ENCODE measurements at regions of chr19 and their contacts with region 1.

Region 1: DNA sequence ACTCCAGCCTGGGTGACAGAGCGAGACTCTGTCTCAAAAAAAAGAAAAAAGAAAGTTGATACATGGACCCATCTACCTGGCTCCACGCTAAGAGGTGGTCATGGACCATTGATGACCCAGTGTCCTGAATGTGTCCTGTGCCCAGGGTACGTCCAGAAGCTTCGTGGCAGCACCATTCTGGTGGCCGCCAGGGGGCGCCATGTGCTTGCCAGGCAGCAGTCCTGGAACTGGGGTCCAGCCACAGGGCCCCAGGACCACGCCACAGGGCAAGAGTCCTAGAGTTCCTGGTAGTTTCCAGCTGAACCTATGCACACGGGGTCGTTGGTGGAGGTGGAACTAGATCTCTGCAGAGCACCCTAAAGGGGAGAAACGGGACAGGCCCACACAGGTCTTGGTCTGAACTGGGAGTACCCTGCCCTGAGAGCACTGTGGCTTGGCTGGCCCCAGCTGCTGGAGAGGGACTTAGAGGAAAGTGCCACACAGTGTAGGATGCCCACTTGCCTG is 19.9 kb upstream of the FBXO27 start:
- DNase-seq: no peak
- H3K27ac ChIP-seq: no peak overlapping the region
- CTCF ChIP-seq: peak; percentile 90

Region 2: GRCh38 chr19:38899447-38900219 is 152.7 kb before region 1 on chr19 and contains the starts of genes NFKBIB and SIRT2:
- CTCF ChIA-PET with region 1: no interaction called
- POLR2A ChIA-PET with region 1: no interaction called
- DNase-seq: peak; percentile 99
- H3K27ac ChIP-seq: peak within 1 kb of the TSS; percentile 72
- CTCF ChIP-seq: no peak

Region 3: GRCh38 chr19:38949580-38950367 is 102.5 kb before region 1 on chr19:
- CTCF ChIA-PET with region 1: no interaction called
- POLR2A ChIA-PET with region 1: no interaction called
- DNase-seq: no peak
- H3K27ac ChIP-seq: no peak overlapping the region
- CTCF ChIP-seq: no peak

Region 4: DNA sequence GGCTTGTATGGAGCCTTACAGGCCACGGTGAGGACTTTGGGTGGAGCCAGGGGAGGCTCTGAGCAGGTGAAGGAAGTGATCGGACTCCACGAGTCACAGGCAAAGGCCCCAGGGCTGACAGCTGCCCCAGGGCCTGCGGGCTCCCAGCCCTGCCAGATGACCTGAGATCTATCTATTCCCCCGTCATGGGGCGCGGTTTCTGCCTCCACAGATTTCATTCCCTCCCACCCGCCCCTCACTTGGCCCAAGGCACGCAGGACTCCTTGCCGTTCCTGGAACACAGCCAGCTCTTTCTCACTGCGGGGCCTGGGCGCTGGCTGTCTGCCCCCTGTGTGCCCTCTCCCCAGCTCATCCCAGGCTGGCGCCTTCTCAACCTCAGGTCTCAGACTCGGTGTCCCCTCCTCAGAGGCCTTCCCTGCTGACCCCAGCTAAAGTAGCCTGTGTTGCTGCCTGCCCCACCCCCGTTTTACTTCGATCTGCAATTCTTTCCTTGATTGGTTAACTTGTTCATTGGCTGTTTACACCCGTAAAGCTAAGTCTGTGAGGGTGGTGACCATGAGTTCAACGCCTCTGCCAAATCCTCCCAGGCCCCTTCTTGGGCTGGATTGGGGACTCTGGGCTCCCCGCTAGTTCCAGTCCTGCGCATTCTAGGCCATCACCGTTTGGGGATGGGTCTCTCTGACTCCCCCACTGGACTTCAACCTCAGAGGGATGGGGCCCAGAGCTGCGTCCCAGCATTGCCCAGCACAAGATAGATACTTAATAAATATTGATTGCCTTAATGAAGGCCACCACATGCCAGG is 59.5 kb after region 1 on chr19:
- CTCF ChIA-PET with region 1: interaction called, 16 read pairs
- POLR2A ChIA-PET with region 1: no interaction called
- DNase-seq: peak; percentile 60
- H3K27ac ChIP-seq: peak overlapping the region; percentile 83
- CTCF ChIP-seq: no peak